Activated naive CD4-positive, alpha-beta T cell treated with anti-CD3 and anti-CD28 coated beads for 36 hours (primary cell): ENCODE measurements at regions of chr1 and their contacts with region 1.

Region 1: DNA sequence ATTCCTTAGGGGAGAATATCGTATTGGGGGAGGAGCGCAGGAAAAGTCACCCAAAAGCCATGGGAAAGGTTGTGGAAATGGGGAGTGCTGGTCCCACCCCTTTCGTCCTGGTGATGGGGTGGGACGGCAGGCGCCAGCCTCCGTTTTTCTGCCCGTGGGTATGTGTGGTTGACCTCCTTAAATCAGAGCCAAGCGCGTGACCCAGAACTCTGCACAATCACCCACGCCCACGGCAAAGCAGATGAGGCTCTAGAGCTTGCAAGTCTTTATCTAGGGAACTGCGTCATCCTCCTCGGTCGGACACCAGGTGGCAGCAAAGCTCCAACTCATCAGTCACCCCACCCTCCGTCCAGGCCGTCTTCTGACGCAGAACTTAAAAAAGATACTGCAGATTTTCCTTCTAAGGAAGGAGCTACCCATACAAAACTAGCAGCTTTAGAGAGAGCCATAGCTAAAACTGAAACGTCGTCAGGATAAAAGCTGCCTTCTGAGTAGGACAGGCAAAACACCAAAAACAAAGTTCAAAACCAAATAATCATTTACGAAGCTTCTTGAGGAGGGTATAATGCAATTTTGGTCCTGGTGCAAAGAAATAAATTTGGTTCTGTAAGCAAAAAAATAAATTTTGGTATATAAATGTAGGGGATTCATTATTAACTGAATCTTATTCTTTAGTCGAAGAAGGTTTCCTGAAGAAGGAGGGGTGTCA is 62.0 kb downstream of the TBX19 start:
- DNase-seq: peak; percentile 92
- H3K4me3 Mint-ChIP-seq: no peak overlapping the region
- H3K27ac Mint-ChIP-seq: no peak overlapping the region
- H3K4me1 Mint-ChIP-seq: peaks cover 19% of the 10 kb centered on the region
- H3K27me3 Mint-ChIP-seq: no peaks in the 10 kb centered on the region

Region 2: GRCh38 chr1:168297019-168297730 is 45.6 kb before region 1 on chr1:
- CTCF ChIA-PET with region 1: no interaction called
- intact Hi-C with region 1: no loop called
- DNase-seq: no peak
- H3K4me3 Mint-ChIP-seq: no peak overlapping the region
- H3K27ac Mint-ChIP-seq: no peak overlapping the region
- H3K4me1 Mint-ChIP-seq: no peaks in the 10 kb centered on the region
- H3K27me3 Mint-ChIP-seq: no peaks in the 10 kb centered on the region

Region 3: DNA sequence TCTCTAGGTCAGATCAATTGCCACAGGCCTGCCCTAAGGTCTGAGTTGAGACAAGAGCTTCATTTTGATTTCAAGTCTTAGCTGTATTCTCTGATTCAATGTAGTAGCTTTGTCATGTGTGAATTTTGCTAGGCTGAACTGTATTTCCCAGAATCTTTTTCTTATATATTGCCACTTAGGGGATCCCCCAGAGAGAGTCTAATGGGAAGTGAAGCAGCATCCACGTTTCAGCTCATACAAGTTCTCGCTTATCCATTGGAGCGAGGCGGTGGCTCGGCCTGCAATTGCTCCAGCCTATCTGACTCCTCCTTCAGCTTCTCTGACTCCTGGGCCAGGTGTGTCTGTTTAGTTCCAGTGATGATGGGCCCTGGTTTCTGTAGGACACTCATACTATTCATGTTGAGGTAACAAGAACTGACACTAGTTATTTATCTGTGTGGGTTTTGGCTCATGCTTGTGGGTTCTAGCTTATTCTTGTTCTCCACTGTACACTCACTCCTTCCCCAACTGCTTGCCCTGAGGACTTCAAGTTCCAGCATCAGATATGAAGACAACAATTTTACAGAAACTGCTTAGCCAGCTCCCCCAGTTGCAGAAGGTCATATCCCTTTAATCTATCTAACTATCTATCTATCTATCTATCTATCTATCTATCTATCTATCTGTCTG is 13.9 kb before region 1 on chr1:
- CTCF ChIA-PET with region 1: interaction called, 16 read pairs
- intact Hi-C with region 1: no loop called
- DNase-seq: no peak
- H3K4me3 Mint-ChIP-seq: no peak overlapping the region
- H3K27ac Mint-ChIP-seq: no peak overlapping the region
- H3K4me1 Mint-ChIP-seq: no peaks in the 10 kb centered on the region
- H3K27me3 Mint-ChIP-seq: no peaks in the 10 kb centered on the region

Region 4: DNA sequence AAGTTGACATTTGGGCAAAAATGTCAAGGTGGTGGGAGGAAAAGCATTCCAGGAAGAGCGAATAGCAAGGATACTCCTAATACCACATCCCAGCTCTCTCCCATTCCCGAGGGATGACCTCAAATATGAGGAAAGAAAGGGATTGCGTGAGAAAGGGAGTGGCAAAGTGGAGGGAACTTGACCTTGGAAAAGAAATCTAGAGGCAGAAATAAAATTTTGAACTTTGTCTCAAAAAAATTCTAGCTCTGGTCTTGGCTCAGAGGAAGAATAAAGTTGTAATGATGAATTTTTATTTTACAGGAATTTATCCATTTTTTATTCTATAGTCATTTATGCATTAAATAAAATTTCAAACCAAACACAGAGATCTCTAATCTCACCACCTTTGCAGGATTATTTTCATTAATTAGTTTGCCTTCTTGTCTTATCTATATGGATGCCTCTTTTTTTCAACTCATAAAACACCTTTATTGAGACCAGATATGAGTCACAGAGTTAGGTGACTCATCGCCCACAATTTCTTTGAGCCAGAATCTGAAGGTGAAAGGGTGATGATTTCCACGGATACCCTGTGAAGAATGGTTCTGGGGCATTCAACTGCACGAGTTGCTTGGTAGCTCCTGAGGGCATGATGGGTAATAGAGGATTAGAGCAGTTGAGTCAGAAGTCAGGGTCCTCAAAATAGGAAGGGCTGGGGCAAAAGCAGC is 66.0 kb after region 1 on chr1:
- CTCF ChIA-PET with region 1: interaction called, 4 read pairs
- intact Hi-C with region 1: loop called (anchors 1 kb)
- DNase-seq: peak; percentile 82
- H3K4me3 Mint-ChIP-seq: no peak overlapping the region
- H3K27ac Mint-ChIP-seq: peak overlapping the region; percentile 32
- H3K4me1 Mint-ChIP-seq: peaks cover 34% of the 10 kb centered on the region
- H3K27me3 Mint-ChIP-seq: no peaks in the 10 kb centered on the region

Region 5: DNA sequence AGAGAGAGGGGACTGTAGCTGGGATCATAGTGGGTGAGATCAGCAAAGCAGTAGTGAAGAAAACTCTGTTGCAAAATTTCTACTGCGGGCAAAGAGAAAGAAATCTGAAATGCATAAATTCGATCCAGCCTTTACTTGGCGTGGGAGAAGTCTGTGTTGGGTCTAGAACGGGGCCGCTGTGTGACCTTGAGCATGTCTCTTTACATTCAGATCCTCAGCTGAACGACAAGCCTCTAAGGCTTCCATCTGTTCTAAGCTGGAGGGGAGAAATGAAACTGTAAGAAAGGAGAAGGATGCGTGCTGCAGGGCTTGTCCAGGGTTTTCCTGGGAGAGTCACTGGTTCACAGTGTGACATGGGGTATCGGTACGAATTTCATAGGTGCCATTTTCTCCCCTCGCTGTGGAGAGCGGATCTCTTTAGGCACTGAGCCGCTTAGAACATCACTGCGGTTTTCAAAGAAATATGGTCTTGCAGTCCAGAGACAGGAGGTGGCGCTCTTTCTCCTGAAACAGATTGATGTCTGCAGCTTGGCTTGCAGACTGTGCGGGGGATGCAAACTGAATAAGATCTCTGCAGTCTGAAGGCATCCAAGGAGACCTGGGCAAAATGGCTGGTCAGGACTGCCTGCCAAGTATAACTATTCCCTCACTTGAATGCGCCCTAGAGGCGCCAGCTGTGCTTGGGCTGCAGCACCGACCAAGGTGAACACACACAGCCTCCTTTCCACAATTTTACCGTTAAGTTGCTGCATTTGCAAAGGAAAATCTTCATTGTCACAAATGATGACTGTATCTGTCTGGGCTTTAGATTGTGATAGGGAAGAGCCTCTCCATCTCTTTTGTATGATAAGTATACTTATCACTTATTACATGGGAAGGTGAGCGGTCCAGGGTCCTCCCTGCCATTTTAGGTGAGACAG is 97.0 kb after region 1 on chr1:
- CTCF ChIA-PET with region 1: interaction called, 72 read pairs
- intact Hi-C with region 1: loop called (anchors 1 kb)
- DNase-seq: peak; percentile 91
- H3K4me3 Mint-ChIP-seq: peak overlapping the region; percentile 41
- H3K27ac Mint-ChIP-seq: no peak overlapping the region
- H3K4me1 Mint-ChIP-seq: peaks cover 30% of the 10 kb centered on the region
- H3K27me3 Mint-ChIP-seq: no peaks in the 10 kb centered on the region

Region 6: DNA sequence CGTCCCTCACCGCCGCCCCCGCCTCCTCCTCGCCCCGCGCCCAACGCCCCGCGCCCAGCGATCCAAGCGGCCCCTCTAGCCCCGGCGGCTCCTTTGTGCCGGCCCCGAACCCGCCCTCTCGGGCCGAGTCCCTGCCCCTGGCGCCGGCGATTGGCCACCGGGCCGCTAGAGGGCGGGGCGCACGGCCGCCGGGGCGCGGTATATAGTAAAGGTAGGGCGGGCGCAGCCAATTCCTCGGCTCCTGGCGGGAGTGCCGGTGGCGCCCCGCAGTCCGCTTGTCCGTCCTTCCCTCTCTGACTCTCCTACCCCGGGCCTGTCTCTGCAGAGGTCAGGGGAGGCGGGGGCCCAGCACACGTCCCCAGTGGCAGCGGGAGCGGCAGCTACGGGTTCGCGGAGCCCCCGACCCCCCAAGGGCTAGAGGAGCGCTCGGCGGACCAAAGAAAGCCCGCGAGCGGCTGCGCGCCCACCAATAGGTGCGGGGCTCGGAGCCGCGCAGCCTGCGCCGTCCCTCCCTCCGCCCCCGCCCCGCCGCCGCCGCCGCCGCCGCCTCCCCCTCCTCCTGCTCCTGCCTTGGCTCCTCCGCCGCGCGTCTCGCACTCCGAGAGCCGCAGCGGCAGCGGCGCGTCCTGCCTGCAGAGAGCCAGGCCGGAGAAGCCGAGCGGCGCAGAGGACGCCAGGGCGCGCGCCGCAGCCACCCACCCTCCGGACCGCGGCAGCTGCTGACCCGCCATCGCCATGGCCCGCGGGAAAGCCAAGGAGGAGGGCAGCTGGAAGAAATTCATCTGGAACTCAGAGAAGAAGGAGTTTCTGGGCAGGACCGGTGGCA is 763.6 kb after region 1 on chr1 and contains the start of gene ATP1B1:
- CTCF ChIA-PET with region 1: no interaction called
- intact Hi-C with region 1: loop called (anchors 10 kb)
- DNase-seq: peak; percentile 78
- H3K4me3 Mint-ChIP-seq: peak within 1 kb of the TSS; percentile 77
- H3K27ac Mint-ChIP-seq: peak within 1 kb of the TSS; percentile 16
- H3K4me1 Mint-ChIP-seq: peaks cover 43% of the 10 kb centered on the region
- H3K27me3 Mint-ChIP-seq: peaks cover 15% of the 10 kb centered on the region
- total RNA-seq, gene ATP1B1: 5.6 to 6.2 TPM